A673 (cell line): ENCODE measurements at regions of chr14 and their contacts with region 1.

Region 1: DNA sequence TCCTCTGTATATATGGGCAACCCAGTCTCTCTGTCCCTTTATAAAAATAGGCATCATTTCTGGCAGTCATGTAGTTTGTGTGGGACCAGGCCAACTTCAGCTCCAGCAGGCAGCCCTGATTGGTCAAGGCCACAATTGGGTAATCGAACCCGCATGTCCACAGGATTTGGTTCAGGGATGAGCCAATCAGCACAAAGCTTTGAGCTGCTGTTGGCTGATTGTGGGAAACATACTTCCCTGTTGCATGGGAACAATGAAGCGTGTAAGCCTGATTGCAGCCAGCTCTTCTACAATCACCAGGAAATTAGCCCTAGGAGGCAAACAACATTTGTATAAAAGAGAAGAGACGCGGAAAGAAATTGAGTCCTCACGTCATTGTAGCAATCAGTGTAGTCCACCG is 328.6 kb downstream of the PCNX1 start:
- DNase-seq: peak; percentile 94
- H3K4me3 ChIP-seq: peak overlapping the region; percentile 10
- H3K27ac ChIP-seq: peak overlapping the region; percentile 67
- H3K4me1 ChIP-seq: peaks cover 13% of the 10 kb centered on the region
- H3K27me3 ChIP-seq: no peaks in the 10 kb centered on the region
- CTCF ChIP-seq: no peak

Region 2: DNA sequence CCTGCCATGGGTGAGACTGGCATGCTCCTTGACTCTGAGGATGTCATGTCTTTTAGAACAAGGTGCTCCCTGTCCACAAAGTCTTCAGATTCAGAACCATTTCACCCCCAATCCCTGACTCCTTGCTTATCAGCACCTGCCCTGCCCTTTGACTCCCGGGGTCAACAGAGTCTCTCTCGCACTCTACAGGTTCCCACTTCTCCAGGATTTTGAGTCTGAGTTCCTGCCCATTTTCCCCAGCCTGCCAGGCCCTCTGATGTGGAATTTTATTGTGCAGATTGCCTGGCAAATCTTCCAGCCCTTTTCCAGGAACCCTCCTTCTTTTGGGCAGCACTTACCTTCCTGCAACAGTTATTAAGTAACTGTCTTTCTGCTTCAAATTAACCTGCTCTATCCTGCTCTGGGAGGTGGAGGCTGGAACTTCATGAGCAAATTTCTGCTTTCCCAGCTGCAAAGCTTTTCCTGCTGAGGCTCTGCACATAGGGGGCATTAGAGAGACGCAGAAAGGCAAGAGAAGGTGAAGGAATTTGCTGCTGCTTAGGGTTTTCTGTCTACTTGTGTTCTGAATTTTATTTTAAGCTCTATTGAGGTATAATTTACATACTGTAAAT is 69.6 kb before region 1 on chr14:
- CTCF ChIA-PET with region 1: interaction called, 3 read pairs
- POLR2A ChIA-PET with region 1: interaction called, 11 read pairs
- intact Hi-C with region 1: no loop called
- DNase-seq: peak; percentile 83
- H3K4me3 ChIP-seq: no peak overlapping the region
- H3K27ac ChIP-seq: no peak overlapping the region
- H3K4me1 ChIP-seq: peaks cover 26% of the 10 kb centered on the region
- H3K27me3 ChIP-seq: no peaks in the 10 kb centered on the region
- CTCF ChIP-seq: peak; percentile 88